H1 (cell line): ENCODE measurements at regions of chr20 and their contacts with region 1.

Region 1: DNA sequence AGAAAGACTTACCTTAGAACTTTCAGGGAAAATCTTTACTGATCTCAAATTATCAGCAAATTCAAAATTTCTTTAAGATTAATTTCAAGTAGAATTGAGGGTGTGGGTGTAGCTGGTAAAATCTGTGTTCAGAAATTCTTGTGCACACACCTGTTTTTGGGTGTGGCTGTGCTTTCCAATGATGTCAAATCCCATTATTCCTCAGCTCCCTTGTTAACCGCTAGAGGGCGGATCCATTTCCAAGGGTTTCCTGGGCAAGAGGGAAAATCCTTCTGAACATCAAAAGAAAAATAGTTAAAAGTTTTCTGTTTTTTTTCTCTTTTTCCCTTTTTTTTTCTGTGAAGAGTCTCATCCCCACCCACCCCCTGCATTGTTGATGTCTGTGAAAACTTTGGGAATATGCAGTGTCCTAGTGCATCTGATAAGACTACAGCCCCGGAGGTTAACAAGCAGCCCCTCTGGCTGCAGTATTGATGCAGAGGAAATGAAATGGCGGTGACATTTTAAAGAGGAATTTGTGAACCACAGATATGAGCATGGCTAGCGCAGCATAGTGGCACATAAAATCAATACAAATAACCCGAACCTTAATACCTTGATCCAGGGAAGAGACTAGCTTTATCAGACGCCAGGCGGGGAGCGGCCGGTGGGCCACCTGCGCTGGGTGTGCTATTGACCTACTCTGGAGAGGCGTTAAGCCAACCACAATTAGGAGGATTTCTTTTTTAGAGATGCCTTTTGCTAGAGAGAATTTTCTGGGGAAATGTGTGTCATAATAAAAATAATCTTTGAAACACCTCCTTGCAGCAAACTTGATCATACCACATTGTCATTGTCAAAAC is 130.9 kb downstream of the FOXA2 start:
- DNase-seq: no peak
- H3K4me3 ChIP-seq: no peak overlapping the region
- H3K27ac ChIP-seq: no peak overlapping the region
- H3K4me1 ChIP-seq: peaks cover 0 to 11% (median 4%) of the 10 kb centered on the region in 4 experiments; a peak in 5 of 7 replicates
- H3K27me3 ChIP-seq: peaks cover 21 to 51% (median 42%) of the 10 kb centered on the region in 4 experiments
- CTCF ChIP-seq: peak; percentile 9 to 72 (median 54)
- EP300 ChIP-seq: no peak
- POLR2A ChIP-seq: no peak
- RAD21 ChIP-seq: peak; percentile 46 to 64

Region 2: GRCh38 chr20:22438932-22439331 is 14.5 kb before region 1 on chr20:
- CTCF ChIA-PET with region 1: interaction called, 24 read pairs
- POLR2A ChIA-PET with region 1: interaction called, 3 read pairs
- DNase-seq: no peak
- H3K4me3 ChIP-seq: no peak overlapping the region
- H3K27ac ChIP-seq: no peak overlapping the region
- H3K4me1 ChIP-seq: no peaks in the 10 kb centered on the region
- H3K27me3 ChIP-seq: peaks cover 0 to 5% (median 2%) of the 10 kb centered on the region in 4 experiments; a peak in 4 of 7 replicates
- CTCF ChIP-seq: peak; percentile 24 to 57 (median 54); a peak in 3 of 4 replicates
- EP300 ChIP-seq: no peak
- POLR2A ChIP-seq: no peak
- RAD21 ChIP-seq: peak; percentile 15 to 51; a peak in 3 of 4 replicates

Region 3: GRCh38 chr20:22480336-22480735 is 26.9 kb after region 1 on chr20:
- CTCF ChIA-PET with region 1: interaction called, 12 read pairs
- POLR2A ChIA-PET with region 1: interaction called, 3 read pairs
- DNase-seq: no peak
- H3K4me3 ChIP-seq: no peak overlapping the region
- H3K27ac ChIP-seq: no peak overlapping the region
- H3K4me1 ChIP-seq: no peaks in the 10 kb centered on the region; a peak in 2 of 7 replicates
- H3K27me3 ChIP-seq: no peaks in the 10 kb centered on the region
- CTCF ChIP-seq: no peak
- EP300 ChIP-seq: no peak
- POLR2A ChIP-seq: no peak
- RAD21 ChIP-seq: no peak